ENCODE measurements at regions of chr17 and their contacts with region 1.

Region 1: DNA sequence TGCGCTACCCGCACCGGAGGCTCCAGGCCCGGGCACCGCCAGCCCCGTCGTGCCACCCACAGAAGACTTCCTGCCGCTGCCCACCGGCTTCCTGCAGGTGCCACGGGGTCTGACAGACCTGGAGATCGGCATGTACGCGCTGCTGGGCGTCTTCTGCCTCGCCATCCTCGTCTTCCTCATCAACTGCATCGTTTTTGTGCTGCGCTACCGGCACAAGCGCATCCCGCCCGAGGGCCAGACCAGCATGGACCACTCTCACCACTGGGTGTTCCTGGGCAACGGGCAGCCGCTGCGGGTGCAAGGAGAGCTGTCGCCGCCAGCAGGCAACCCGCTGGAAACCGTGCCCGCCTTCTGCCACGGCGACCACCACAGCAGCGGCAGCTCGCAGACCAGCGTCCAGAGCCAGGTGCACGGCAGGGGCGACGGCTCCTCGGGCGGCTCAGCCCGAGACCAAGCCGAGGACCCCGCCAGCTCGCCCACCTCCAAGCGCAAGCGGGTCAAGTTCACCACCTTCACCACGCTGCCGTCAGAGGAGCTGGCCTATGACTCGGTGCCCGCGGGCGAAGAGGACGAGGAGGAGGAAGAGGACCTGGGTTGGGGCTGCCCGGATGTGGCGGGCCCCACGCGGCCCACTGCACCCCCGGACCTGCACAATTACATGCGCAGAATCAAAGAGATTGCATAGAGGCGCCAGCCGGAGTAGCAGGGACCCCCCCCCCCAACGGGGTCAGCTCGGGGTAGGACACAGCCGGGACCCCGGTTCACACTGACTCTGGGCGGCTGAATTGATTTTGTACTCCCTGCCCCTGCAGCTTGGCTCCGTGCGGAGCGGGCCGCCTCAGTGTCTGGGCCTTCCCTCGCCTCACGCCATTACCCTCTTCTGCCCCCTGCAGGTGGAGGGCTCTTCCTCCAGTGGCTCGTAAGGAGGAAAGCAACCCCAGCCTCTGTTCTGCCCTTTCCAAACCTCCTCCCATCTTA is 58.5 kb downstream of the TMEM132E start:
- DNase-seq: peak; percentile 82
- H3K4me3 ChIP-seq: peak overlapping the region; percentile 31
- H3K27ac ChIP-seq: no peak overlapping the region
- H3K4me1 ChIP-seq: peaks cover 6% of the 10 kb centered on the region
- H3K27me3 ChIP-seq: peaks cover 20% of the 10 kb centered on the region
- CTCF ChIP-seq: peak; percentile 73

Region 2: DNA sequence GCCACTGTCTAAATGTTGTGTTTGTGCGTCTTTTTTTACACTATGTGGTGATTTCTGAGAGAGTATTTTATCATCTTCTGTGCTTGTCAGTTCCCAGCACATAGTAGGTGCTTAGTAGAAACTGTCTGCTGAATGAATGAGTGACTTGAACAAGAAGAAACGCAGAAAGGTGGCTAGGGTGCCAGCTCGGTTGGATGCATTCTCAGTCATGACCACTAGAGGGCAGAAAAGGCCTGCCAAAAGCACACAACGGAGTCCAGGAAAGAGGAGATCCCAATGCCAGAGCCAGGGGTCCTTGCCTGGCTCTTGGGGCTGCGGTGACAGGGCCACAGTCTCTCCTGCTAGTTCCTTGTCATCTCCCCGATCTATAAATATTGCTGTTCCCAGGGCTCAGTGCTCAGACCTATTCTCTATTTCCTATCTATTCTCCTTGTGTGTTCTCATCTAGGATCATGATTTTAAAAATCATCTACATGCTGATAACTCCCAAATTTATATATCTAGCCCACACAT is 217.5 kb before region 1 on chr17:
- intact Hi-C with region 1: loop called (anchors 2 kb)
- DNase-seq: peak; percentile 66
- H3K4me3 ChIP-seq: no peak overlapping the region
- H3K27ac ChIP-seq: no peak overlapping the region
- H3K4me1 ChIP-seq: no peaks in the 10 kb centered on the region
- H3K27me3 ChIP-seq: peaks cover 3% of the 10 kb centered on the region
- CTCF ChIP-seq: peak; percentile 96

Region 3: DNA sequence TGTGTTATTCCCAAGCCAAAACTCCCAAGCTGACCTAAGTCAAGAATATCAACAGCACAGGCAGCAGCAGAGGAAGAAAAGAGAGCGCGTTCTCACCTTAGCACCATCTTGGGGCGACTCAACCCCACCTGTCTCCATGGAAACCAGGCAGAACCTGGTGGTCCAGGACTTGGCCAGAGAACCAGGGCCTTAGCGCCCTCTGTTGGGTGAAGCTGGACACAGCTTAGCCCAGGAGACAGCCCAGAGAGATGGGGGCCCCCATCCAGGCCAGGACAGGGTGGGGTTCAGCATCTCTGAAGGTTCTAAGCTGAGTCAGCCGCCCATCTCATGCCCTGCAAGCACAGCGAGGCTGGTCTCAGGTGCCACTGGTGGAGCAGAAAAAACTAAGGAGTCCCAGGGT is 118.6 kb before region 1 on chr17:
- intact Hi-C with region 1: no loop called
- DNase-seq: no peak
- H3K4me3 ChIP-seq: no peak overlapping the region
- H3K27ac ChIP-seq: no peak overlapping the region
- H3K4me1 ChIP-seq: no peaks in the 10 kb centered on the region
- H3K27me3 ChIP-seq: no peaks in the 10 kb centered on the region
- CTCF ChIP-seq: no peak

Region 4: DNA sequence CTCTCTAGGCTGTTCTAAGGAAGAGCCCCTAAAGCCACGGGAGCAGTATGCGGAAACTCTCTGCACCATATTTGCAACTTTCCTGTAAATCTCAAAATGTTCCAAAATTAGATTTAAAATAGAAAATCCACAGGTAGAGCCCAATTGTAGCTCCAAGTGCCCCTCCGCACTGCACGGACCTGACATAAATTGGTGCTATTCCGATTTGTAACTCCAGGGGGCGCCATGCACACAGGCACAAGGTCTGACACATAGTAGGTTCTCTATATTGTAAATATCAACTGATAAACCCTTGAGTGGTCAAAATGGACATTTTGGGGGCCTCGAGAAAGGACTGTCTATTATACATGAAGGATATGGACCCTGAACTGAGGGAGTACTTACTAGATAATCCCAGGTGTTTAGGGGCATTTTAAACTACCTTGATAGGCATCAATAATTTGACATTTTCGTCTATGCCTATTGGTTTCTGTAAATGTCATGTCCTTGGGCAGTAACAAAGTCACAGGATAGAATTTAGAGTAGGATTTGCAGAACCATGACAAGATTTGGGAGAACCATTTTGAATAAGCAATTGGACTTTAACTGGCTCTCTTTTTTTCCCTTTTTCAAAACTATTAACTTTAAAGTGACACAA is 95.0 kb before region 1 on chr17:
- intact Hi-C with region 1: loop called (anchors 5 kb)
- DNase-seq: peak; percentile 30
- H3K4me3 ChIP-seq: no peak overlapping the region
- H3K27ac ChIP-seq: no peak overlapping the region
- H3K4me1 ChIP-seq: no peaks in the 10 kb centered on the region
- H3K27me3 ChIP-seq: no peaks in the 10 kb centered on the region
- CTCF ChIP-seq: peak; percentile 78

Region 5: DNA sequence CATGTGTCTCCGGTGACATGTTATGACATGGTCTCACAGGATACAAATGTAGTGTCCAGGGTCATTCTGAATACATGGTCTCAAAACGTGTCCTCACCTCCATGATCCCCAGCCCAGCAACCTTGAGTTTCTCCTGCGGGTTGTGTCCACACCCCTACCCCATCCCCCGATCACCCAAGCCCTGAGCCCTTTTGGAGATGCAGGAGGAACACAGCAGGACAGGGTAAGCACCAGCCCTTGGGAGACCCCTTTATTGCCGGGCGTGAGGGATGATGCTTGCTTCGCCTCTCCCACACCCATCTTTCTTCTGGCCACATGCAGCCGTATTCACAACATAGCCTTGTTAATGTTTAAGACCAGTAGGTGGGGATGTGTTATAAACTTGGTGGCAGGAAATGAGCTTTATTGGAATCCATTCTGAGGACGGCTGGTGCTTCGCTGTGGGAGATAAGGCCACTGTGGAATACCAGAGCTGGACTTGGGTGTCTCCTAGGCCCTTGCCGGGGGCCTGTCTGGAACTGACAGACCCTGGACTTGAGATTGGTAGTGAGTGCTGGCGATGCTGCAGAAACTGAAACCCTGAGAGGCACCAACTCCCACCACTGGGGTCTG is 52.9 kb before region 1 on chr17:
- intact Hi-C with region 1: no loop called
- DNase-seq: no peak
- H3K4me3 ChIP-seq: no peak overlapping the region
- H3K27ac ChIP-seq: no peak overlapping the region
- H3K4me1 ChIP-seq: no peaks in the 10 kb centered on the region
- H3K27me3 ChIP-seq: peaks cover 39% of the 10 kb centered on the region
- CTCF ChIP-seq: no peak

Measured in colonic mucosa (tissue), 4 donors.